Activated CD4-positive, alpha-beta T cell treated with anti-CD3 and anti-CD28 coated beads, Interleukin-2, amount 10 ng/mL, durations not matched to agents 24 days and 14 days (primary cell): ENCODE measurements at regions of chr17 and their contacts with region 1.

Region 1: GRCh38 chr17:21126645-21127510 is at the start of gene DHRS7B:
- DNase-seq: peak; percentile 99
- H3K4me3 Mint-ChIP-seq: peak within 1 kb of the TSS; percentile 89
- H3K27ac Mint-ChIP-seq: peak within 1 kb of the TSS; percentile 94
- H3K4me1 Mint-ChIP-seq: peaks cover 26% of the 10 kb centered on the region
- H3K27me3 Mint-ChIP-seq: no peaks in the 10 kb centered on the region
- total RNA-seq, gene DHRS7B: 19.4 and 22.8 TPM in 2 replicates

Region 2: GRCh38 chr17:21098934-21099689 is 27.8 kb before region 1 on chr17:
- intact Hi-C with region 1: loop called (anchors 2 kb)
- DNase-seq: peak; percentile 93
- H3K4me3 Mint-ChIP-seq: peak overlapping the region; percentile 92
- H3K27ac Mint-ChIP-seq: peak overlapping the region; percentile 98
- H3K4me1 Mint-ChIP-seq: peaks cover 15% of the 10 kb centered on the region
- H3K27me3 Mint-ChIP-seq: no peaks in the 10 kb centered on the region

Region 3: DNA sequence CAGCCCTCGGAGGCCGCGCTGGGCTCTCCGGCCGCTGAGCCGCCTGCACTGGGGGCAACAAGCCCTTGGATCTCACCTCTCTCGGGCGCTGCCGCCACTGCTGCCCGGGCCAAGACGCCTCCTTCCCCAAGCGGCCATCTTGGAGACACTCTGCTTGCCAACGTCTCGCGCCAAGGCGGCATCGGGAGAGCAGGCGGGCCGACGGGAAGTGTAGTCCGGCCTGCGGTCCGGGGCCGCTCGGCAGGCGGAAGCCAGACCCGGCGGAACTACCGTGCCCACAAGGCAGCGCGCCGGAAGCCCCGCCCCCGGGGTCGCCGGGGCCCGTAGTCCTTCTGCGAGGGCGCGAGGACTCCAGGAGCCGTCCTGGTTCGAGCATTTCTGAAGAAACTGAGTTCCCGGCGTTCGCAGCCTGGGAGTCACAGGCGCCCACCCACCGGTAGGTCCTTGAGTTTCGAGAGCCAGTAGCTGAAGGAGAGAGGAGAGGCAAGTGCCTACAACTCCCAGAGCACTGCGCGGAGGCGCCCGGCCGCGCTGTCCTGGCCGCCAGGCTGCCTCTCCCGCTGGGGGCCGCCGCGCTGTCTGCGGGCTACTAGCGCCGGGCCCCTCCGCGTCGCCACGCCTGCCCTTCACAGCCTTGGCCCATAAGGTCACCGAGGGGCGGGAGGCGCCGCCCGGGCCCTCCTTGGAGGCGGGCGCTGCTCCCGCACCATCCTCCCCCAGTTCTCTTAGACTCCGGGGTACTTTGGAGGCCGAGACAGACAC is 87.3 kb after region 1 on chr17 and contains the start of gene TMEM11:
- intact Hi-C with region 1: loop called (anchors 2 kb)
- DNase-seq: peak; percentile 99
- H3K4me3 Mint-ChIP-seq: peak within 1 kb of the TSS; percentile 90
- H3K27ac Mint-ChIP-seq: peak within 1 kb of the TSS; percentile 95
- H3K4me1 Mint-ChIP-seq: peaks cover 48% of the 10 kb centered on the region
- H3K27me3 Mint-ChIP-seq: no peaks in the 10 kb centered on the region
- total RNA-seq, gene TMEM11: 33.5 and 34.7 TPM in 2 replicates

Region 4: GRCh38 chr17:21457051-21458026 is 330.5 kb after region 1 on chr17:
- intact Hi-C with region 1: loop called (anchors 5 kb)
- DNase-seq: peak; percentile 98
- H3K4me3 Mint-ChIP-seq: no peak overlapping the region
- H3K27ac Mint-ChIP-seq: no peak overlapping the region
- H3K4me1 Mint-ChIP-seq: peaks cover 13% of the 10 kb centered on the region
- H3K27me3 Mint-ChIP-seq: peaks cover 42% of the 10 kb centered on the region